Activated CD4-positive, alpha-beta T cell treated with anti-CD3 and anti-CD28 coated beads for 36 hours (primary cell): ENCODE measurements at regions of chr19 and their contacts with region 1.

Region 1: GRCh38 chr19:52637718-52638585 is at the start of gene ZNF83:
- DNase-seq: peak; percentile 99
- ATAC-seq: peak; percentile 97
- H3K4me3 Mint-ChIP-seq: peak within 1 kb of the TSS; percentile 92
- H3K27ac Mint-ChIP-seq: peak within 1 kb of the TSS; percentile 96
- H3K4me1 Mint-ChIP-seq: peaks cover 13% of the 10 kb centered on the region
- H3K27me3 Mint-ChIP-seq: no peaks in the 10 kb centered on the region
- total RNA-seq, gene ZNF83: 23.8 to 27.5 TPM

Region 2: GRCh38 chr19:52139252-52140031 is 498.5 kb before region 1 on chr19 and contains the start of gene ZNF616:
- CTCF ChIA-PET with region 1: no interaction called
- POLR2A ChIA-PET with region 1: no interaction called
- intact Hi-C with region 1: loop called in 1 of 2 experiments (anchors 1 kb)
- DNase-seq: peak; percentile 90
- ATAC-seq: peak; percentile 81
- H3K4me3 Mint-ChIP-seq: peak within 1 kb of the TSS; percentile 96
- H3K27ac Mint-ChIP-seq: peak within 1 kb of the TSS; percentile 97
- H3K4me1 Mint-ChIP-seq: peaks cover 27% of the 10 kb centered on the region
- H3K27me3 Mint-ChIP-seq: no peaks in the 10 kb centered on the region
- total RNA-seq, gene ZNF616: 13.9 to 15.7 TPM

Region 3: GRCh38 chr19:52336117-52336790 is 301.7 kb before region 1 on chr19 and contains the start of gene ZNF610:
- CTCF ChIA-PET with region 1: no interaction called
- POLR2A ChIA-PET with region 1: no interaction called
- intact Hi-C with region 1: loop called in 1 of 2 experiments (anchors 1 kb)
- DNase-seq: peak; percentile 96
- ATAC-seq: peak; percentile 97
- H3K4me3 Mint-ChIP-seq: peak within 1 kb of the TSS; percentile 97
- H3K27ac Mint-ChIP-seq: peak within 1 kb of the TSS; percentile 96
- H3K4me1 Mint-ChIP-seq: peaks cover 10% of the 10 kb centered on the region
- H3K27me3 Mint-ChIP-seq: no peaks in the 10 kb centered on the region
- total RNA-seq, gene ZNF610: 2.3 to 3.3 TPM

Region 4: DNA sequence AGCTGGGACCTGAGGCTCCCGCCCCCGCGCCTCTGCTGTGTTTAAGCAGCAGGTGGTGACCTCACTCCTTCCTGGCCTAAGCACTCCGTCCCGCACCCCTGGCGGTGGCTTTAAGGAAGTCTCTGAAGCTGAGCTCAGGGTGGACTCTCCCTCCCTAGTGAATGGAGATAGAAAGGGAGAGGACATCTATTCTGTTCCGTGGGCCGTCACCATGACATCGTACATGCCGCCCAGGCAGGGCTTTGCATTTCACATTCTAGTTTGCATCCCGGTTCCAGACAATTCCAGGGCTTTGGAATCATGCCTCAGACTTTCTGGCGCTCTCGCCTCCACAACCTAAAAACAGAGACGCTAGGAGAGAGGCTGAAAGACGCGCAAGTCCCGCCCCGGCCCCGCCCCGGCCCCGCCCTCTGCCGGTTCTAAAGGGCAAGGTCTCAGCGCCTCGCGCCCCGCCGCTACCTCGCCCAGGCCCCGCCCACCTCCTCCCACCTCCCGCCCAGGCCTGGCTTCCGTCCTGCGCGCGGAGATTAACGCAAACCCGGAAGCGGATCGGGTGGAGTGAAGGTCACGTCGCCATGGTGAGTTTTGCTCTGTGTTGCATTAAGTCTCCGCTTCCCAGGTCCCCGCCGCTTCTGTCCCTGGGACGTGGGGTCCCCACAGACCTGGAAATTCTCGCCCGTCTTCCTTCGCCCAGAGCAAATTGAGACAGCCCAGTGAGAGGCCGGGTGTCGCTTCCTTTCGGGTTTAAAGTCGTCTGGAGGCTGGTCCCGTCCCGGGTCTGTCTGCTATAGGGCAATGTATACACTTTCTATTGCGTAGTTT is 110.6 kb before region 1 on chr19 and contains the start of gene ZNF808:
- CTCF ChIA-PET with region 1: no interaction called
- POLR2A ChIA-PET with region 1: no interaction called
- intact Hi-C with region 1: loop called (anchors 1 to 2 kb)
- DNase-seq: peak; percentile 99
- ATAC-seq: peak; percentile 92
- H3K4me3 Mint-ChIP-seq: peak within 1 kb of the TSS; percentile 91
- H3K27ac Mint-ChIP-seq: peak within 1 kb of the TSS; percentile 94
- H3K4me1 Mint-ChIP-seq: peaks cover 23% of the 10 kb centered on the region
- H3K27me3 Mint-ChIP-seq: no peaks in the 10 kb centered on the region
- total RNA-seq, gene ZNF808: 25.7 to 29.9 TPM

Region 5: DNA sequence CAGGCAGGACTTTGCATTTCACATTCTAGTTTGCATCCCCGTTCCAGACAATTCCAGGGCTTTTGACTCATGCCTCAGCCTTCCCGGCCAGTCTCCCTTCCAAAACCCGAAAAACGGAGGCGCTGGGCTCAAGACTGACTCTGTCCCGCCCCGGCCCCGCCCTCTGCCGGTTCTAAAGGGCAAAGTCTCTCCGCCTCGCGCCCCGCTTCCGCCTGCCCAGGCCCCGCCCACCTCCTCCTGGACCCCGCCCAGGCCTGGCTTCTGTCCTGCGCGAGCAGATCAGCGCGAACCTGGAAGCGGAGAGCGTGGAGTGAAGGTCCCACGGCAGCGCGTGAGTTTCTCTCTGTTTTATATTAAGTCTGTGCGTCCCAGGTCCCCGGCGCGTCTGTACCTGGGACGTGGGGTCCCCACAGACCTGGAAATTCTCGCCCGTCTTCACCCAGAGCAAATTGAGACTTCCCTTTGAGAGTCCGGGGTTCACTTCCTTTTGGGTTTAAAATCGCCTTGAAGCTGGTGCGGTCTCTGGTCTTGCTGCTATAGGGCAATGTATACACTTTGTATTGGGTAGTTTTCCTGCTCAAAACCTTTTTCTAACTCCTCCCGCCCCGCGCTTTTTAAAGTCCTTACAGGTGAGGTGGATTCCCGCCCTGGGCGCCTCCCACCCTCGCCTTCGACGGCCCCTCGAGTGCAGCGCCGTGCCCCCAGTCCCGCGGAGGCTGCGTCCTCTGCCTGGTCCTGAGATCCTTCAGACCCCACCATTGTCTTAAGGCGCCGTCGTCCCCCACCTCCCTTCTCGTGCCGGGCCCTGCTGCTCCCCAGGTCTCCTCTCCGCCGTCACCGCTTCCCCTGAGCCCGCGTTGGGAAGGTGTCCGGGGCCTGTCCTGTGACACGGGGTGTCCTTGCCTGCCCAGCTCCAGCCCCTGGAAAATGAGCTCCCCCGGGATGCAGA is 36.7 kb before region 1 on chr19:
- CTCF ChIA-PET with region 1: no interaction called
- POLR2A ChIA-PET with region 1: no interaction called
- intact Hi-C with region 1: loop called (anchors 1 to 2 kb)
- DNase-seq: peak; percentile 97
- ATAC-seq: peak; percentile 98
- H3K4me3 Mint-ChIP-seq: peak overlapping the region; percentile 86
- H3K27ac Mint-ChIP-seq: peak overlapping the region; percentile 83
- H3K4me1 Mint-ChIP-seq: peaks cover 26% of the 10 kb centered on the region
- H3K27me3 Mint-ChIP-seq: no peaks in the 10 kb centered on the region

Region 6: GRCh38 chr19:52897144-52897935 is 259.4 kb after region 1 on chr19 and contains the start of gene ZNF320:
- CTCF ChIA-PET with region 1: no interaction called
- POLR2A ChIA-PET with region 1: interaction called, 3 read pairs
- intact Hi-C with region 1: loop called in 1 of 2 experiments (anchors 5 kb)
- DNase-seq: peak; percentile 98
- ATAC-seq: peak; percentile 100
- H3K4me3 Mint-ChIP-seq: peak within 1 kb of the TSS; percentile 88
- H3K27ac Mint-ChIP-seq: peak within 1 kb of the TSS; percentile 93
- H3K4me1 Mint-ChIP-seq: peaks cover 31% of the 10 kb centered on the region
- H3K27me3 Mint-ChIP-seq: no peaks in the 10 kb centered on the region
- total RNA-seq, gene ZNF320: 10.8 to 12.2 TPM

Region 7: GRCh38 chr19:53333463-53334449 is 695.8 kb after region 1 on chr19 and contains the start of gene ZNF845:
- CTCF ChIA-PET with region 1: no interaction called
- POLR2A ChIA-PET with region 1: no interaction called
- intact Hi-C with region 1: loop called in 1 of 2 experiments (anchors 1 kb)
- DNase-seq: peak; percentile 97
- ATAC-seq: peak; percentile 99
- H3K4me3 Mint-ChIP-seq: peak within 1 kb of the TSS; percentile 88
- H3K27ac Mint-ChIP-seq: peak within 1 kb of the TSS; percentile 92
- H3K4me1 Mint-ChIP-seq: peaks cover 10% of the 10 kb centered on the region
- H3K27me3 Mint-ChIP-seq: peaks cover 5% of the 10 kb centered on the region
- total RNA-seq, gene ZNF845: 5.9 to 6.3 TPM